Posterior vena cava (tissue), 2 donors: ENCODE measurements at regions of chrX and their contacts with region 1.

Region 1: GRCh38 chrX:81377329-81377728 is 175.4 kb downstream of the SH3BGRL start:
- DNase-seq: no peak

Region 2: DNA sequence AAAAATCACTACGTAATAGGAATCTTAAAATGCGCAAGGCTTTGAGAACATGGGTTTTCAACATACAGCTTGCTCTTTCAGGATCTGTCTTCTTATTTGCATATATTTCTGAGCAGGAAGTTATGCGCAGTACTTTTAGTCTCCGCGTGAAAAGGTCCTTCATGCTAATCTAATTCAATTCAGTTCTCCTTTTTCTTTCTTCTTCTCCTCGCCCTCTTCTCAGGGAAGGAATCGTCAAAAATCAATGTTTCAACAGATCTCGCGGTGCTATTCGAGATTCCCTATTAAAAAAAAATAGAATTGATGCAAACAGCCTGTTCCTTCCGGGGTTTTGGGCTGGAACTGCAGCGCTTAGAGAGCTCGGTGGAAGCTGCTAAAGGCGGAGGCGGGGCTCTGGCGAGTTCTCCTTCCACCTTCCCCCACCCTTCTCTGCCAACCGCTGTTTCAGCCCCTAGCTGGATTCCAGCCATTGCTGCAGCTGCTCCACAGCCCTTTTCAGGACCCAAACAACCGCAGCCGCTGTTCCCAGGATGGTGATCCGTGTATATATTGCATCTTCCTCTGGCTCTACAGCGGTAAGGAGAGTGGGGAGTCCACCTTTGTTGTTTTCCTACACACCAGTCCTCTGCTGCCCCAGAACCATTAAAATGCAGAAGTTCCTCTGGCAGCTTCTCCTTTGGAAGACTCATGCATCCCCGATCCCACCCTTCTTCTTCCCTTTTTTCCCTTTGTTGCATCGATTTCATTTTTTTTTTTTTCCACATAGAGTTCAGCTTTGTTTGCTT is 175.5 kb before region 1 on chrX and contains the starts of genes HMGN5 and SH3BGRL:
- intact Hi-C with region 1: loop called in 1 of 2 experiments (anchors 10 kb)
- DNase-seq: peak; percentile 90
- total RNA-seq, gene HMGN5: 7.9 to 8.4 TPM
- total RNA-seq, gene SH3BGRL: 170 to 227 TPM

Region 3: GRCh38 chrX:81367291-81367690 is 10.0 kb before region 1 on chrX:
- intact Hi-C with region 1: no loop called
- DNase-seq: no peak

Region 4: GRCh38 chrX:81414630-81415029 is 37.3 kb after region 1 on chrX:
- intact Hi-C with region 1: no loop called
- DNase-seq: no peak